ENCODE measurements at regions of chr5 and their contacts with region 1.

Region 1: DNA sequence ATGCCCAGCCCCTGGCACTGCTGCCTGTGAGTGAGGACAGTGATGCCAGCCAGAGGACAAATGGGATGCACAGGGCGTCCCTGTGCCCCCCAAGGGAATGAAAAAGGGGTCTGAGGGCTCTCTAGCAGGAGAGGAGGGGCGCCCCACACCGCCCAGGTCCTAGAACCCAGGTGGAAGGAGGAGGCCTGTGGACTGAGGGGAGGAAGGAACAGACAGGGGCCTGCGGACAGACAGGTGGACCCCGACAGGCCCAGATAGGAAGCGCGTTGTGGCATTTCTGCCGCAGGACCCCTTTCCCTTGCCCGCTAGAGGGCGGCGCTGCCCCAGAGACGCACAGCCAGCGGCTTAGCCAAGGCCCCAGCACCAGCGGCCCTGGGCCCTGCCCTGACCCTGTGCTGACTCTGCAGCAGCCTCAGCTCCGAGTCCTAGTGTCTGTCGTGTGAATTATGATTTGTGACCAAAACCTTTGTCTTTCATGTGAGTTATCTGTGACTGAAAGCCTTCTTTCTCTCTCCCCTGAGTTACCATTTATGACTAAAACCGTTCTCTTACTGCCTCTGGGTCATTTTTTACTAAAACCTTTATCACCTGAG is 30.7 kb downstream of the TRIP13 start:
- DNase-seq: peak; percentile 79
- H3K4me3 ChIP-seq: no peak overlapping the region
- H3K27ac ChIP-seq: no peak overlapping the region
- H3K4me1 ChIP-seq: peaks cover 0 to 11% (median 10%) of the 10 kb centered on the region in 4 donors
- H3K27me3 ChIP-seq: peaks cover 27% of the 10 kb centered on the region
- CTCF ChIP-seq: peak; percentile 75 to 89 (median 81)
- EP300 ChIP-seq: no peak
- POLR2A ChIP-seq: no peak

Region 2: GRCh38 chr5:671459-672328 is 251.7 kb before region 1 on chr5:
- in situ Hi-C with region 1: loop called in 1 of 4 experiments (anchors 25 kb)
- intact Hi-C with region 1: no loop called
- DNase-seq: peak; percentile 80
- H3K4me3 ChIP-seq: peak overlapping the region in 2 of 4 donors; percentile 11 to 21
- H3K27ac ChIP-seq: peak overlapping the region; percentile 7 to 61 (median 41)
- H3K4me1 ChIP-seq: peaks cover 34 to 43% (median 36%) of the 10 kb centered on the region in 4 donors
- H3K27me3 ChIP-seq: no peaks in the 10 kb centered on the region
- CTCF ChIP-seq: peak; percentile 94 to 98 (median 96)
- EP300 ChIP-seq: no peak
- POLR2A ChIP-seq: no peak

Region 3: DNA sequence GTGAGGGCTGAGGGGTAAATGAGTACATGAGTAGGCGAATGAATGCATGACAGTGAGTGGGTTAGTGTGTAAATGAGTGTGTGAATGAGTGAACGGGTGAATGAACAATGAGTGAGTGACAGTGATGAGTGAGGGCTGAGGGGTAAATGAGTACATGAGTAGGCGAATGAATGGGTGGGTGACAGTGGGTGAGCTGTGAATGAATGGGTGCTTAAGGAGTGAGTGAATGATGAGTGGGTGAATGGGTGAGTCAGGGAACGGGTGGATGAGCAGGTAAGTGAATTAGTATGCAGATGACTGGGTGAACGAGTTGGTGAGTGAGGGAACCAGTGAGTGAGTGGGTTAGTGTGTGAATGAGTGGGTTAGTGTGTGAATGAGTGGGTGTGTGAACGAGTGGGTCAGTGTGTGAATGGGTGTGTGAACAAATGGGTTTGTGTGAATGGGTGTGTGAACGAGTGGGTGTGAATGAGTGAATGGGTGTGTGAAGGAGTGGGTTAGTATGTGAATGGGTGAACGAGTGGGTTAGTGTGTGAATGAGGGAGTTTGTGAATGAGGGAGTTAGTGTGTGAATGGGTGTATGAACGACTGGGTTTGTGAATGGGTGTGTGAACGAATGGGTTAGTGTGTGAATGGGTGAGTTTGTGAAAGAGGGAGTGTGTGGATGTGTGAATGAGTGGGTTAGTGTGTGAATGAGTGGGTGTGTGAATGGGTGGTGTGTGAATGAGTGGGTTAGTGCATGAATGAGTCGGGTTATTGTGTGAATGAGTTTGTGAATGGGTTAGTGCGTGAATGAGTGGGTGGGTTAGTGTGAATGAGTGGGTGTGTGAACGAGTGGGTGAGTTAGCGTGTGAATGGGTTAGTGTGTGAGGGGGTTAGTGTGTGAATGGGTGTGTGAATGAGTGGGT is 118.1 kb after region 1 on chr5:
- in situ Hi-C with region 1: no loop called
- intact Hi-C with region 1: no loop called
- DNase-seq: no peak
- H3K4me3 ChIP-seq: no peak overlapping the region
- H3K27ac ChIP-seq: no peak overlapping the region
- H3K4me1 ChIP-seq: no peaks in the 10 kb centered on the region
- H3K27me3 ChIP-seq: no peaks in the 10 kb centered on the region
- CTCF ChIP-seq: no peak
- EP300 ChIP-seq: no peak
- POLR2A ChIP-seq: no peak

Region 4: DNA sequence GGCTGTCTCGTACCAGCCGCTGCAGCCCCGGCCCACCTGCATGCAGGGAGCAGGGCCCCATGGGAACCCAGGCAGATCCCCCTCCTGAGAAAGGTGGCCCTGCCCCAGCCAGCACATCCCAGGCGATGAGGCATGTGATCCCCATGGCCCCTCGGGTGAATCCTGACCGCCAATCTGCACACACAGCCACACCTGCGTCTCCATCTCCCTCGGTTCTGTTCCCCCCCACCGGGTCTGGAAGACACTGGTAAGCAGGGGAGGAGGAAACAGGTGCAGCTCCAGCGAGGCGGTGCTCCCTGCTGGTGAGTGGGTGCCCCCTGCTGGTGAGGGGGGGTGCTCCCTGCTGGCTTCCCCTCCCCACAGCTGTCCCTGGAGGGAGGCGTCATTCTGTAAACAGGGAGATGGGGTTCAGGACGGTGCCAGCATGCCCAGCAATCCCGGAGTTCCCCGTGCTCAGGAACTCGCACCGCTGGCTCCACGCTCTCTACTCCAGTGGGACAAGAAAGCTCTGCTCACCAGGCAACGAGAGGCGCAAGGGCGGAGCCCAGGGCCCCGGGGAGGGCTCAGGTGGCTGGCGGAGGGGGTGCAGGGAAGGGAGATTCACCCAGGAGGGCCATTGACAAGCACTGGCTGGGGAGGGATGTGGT is 216.9 kb after region 1 on chr5:
- in situ Hi-C with region 1: loop called in 3 of 4 experiments (anchors 25 kb)
- intact Hi-C with region 1: loop called (anchors 10 kb)
- DNase-seq: peak; percentile 89
- H3K4me3 ChIP-seq: no peak overlapping the region
- H3K27ac ChIP-seq: no peak overlapping the region
- H3K4me1 ChIP-seq: peaks cover 0 to 23% (median 11%) of the 10 kb centered on the region in 4 donors
- H3K27me3 ChIP-seq: no peaks in the 10 kb centered on the region
- CTCF ChIP-seq: peak; percentile 83 to 94 (median 88)
- EP300 ChIP-seq: no peak
- POLR2A ChIP-seq: no peak

Region 5: DNA sequence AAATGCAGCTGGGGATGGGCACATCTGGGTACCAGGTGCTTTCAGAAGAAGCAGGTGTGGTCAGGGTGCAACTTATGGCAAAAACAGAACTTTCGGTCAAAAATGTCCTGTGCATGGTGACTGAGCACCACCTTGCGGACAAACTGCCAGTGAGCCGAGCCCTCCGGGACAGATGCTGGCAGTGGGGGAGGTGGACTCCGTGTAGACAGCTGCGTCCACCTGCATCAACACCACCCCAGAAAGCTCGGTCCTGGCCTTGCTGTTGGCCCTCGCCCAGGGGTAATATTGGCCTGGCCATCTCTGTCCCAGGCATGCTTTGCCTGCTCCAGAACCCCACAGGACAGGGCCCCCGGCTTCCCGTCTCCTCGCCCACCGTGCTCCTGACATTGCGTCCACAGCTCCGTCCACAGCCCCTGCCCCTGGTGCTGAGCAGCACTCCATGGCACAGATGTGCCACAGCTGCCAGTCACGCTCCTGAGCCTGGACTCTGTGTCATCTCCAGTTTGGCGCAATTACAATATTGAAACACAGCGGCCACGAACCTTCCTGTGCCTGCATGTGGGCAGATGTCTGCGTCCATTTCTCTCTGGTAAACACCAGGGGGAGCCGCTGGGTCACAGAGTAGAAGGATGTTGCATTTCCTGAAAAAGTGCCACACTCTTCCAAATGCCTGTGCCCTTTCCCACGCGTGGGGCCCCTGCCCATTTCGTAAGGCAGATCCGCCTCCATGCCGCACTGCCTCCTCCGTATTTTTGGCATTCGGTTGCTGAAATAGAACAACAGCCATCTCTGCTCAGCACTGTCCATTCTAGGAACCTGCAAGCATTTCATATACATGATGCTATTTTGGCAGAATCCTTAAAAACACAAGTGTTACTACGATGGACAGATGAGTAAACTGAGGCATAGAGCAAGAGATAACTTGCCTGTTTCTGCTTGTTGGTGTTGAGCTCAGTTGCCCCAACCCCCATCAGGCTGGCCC is 244.6 kb after region 1 on chr5:
- in situ Hi-C with region 1: loop called in 1 of 4 experiments (anchors 25 kb)
- intact Hi-C with region 1: no loop called
- DNase-seq: peak; percentile 78
- H3K4me3 ChIP-seq: peak overlapping the region in 1 of 4 donors; percentile 20
- H3K27ac ChIP-seq: no peak overlapping the region
- H3K4me1 ChIP-seq: peaks cover 0 to 7% (median 2%) of the 10 kb centered on the region in 4 donors
- H3K27me3 ChIP-seq: no peaks in the 10 kb centered on the region
- CTCF ChIP-seq: peak; percentile 66 to 77 (median 69)
- EP300 ChIP-seq: no peak
- POLR2A ChIP-seq: no peak